BJ (cell line): ENCODE measurements at regions of chr10 and their contacts with region 1.

Region 1: DNA sequence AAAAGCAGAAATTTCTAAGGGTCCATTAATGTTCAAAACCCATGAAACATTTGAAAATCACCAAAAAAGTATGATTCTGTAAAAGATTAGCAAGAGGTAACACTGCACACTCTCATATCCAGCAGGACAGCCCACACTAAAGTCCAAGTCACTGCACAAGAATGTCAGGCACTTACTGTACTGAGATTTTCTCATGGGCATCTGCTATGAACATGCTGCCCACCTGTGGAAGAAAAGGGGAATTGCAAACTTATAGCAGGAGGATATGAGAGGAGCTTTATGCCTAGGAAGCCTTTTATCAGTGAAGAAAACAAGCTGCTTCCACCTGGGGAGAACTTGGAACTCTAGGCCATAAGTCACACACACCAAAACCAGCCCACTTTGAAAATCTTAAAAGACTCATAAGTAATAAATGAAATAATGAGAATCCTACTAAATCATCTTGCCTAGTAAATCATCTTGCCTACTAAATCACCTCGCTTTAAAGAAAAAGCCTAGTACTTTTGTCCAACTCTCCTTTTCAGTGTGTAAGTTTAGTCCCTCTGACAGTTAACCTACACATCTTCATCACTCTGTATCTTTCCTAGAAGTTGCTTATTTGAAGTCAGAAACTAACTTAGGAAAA is 46.1 kb downstream of the ARMH3 start:
- DNase-seq: peak; percentile 56
- H3K4me3 ChIP-seq: no peak overlapping the region
- H3K27me3 ChIP-seq: no peaks in the 10 kb centered on the region
- CTCF ChIP-seq: peak; percentile 97

Region 2: GRCh38 chr10:101830322-101831168 is 179.4 kb before region 1 on chr10:
- CTCF ChIA-PET with region 1: interaction called, 46 read pairs
- POLR2A ChIA-PET with region 1: no interaction called
- DNase-seq: peak; percentile 37
- H3K4me3 ChIP-seq: peak overlapping the region; percentile 45
- H3K27me3 ChIP-seq: no peaks in the 10 kb centered on the region
- CTCF ChIP-seq: no peak

Region 3: GRCh38 chr10:101879456-101880231 is 130.3 kb before region 1 on chr10:
- CTCF ChIA-PET with region 1: interaction called, 152 read pairs
- POLR2A ChIA-PET with region 1: no interaction called
- DNase-seq: peak; percentile 16
- H3K4me3 ChIP-seq: no peak overlapping the region
- H3K27me3 ChIP-seq: no peaks in the 10 kb centered on the region
- CTCF ChIP-seq: no peak

Region 4: GRCh38 chr10:101897633-101898032 is 112.3 kb before region 1 on chr10:
- CTCF ChIA-PET with region 1: interaction called, 15 read pairs
- POLR2A ChIA-PET with region 1: no interaction called
- DNase-seq: no peak
- H3K4me3 ChIP-seq: no peak overlapping the region
- H3K27me3 ChIP-seq: no peaks in the 10 kb centered on the region
- CTCF ChIP-seq: no peak